ENCODE measurements at regions of chr5 and their contacts with region 1.

Region 1: DNA sequence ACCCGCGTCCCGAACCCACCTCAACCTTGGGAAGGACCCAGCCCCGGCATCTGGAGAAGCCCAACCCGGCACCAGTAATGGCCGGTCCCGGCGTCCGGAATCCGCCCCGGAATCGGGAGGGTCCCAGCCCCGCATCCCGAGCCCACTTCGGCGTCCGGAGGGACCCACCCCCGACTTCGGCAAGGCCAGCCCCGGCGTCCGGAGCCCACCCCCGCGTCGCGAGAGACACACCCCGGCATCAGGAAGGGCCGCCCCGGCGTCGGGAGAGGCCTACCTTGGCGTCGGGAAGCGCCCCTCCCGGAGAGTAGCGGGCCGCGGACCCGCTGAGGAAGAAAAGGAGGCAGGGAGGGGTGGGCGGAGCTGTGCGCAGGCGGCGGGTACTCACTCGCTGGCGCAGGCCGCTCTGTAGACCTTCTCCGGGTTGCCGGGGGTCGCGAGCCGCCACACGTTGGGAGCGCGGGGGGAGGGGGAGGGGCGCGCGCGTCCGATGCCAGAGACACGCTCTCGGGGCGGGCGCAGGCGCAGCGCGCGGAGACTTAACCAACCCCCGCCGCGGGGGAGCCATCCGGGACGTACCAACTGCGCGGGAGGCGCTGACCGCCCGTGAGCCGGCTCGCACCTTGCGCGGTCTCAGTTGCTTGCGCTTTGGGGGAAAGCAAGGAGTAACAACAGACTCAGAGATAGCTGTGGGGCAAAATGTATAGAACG is at the start of gene UIMC1:
- DNase-seq: peak; percentile 94
- ATAC-seq: peak; percentile 86
- H3K4me3 Mint-ChIP-seq: peak within 1 kb of the TSS; percentile 94
- H3K27ac Mint-ChIP-seq: peak within 1 kb of the TSS; percentile 89
- H3K4me1 Mint-ChIP-seq: peaks cover 26% of the 10 kb centered on the region
- H3K27me3 Mint-ChIP-seq: peaks cover 5% of the 10 kb centered on the region; the same call in 1 of the 2 replicates
- CTCF ChIP-seq: no peak
- total RNA-seq, gene UIMC1: 44.4 to 48.0 TPM (median 46.1 TPM) in 3 replicates

Region 2: GRCh38 chr5:177022384-177023308 is 16.2 kb after region 1 on chr5 and contains the start of gene ZNF346:
- CTCF ChIA-PET with region 1: interaction called, 19 read pairs
- POLR2A ChIA-PET with region 1: interaction called, 10 read pairs
- DNase-seq: peak; percentile 91
- ATAC-seq: peak; percentile 97
- H3K4me3 Mint-ChIP-seq: peak within 1 kb of the TSS; percentile 98
- H3K27ac Mint-ChIP-seq: peak within 1 kb of the TSS; percentile 95
- H3K4me1 Mint-ChIP-seq: peaks cover 11% of the 10 kb centered on the region
- H3K27me3 Mint-ChIP-seq: no peaks in the 10 kb centered on the region
- CTCF ChIP-seq: peak; percentile 38; the same call in 1 of the 2 replicates
- total RNA-seq, gene ZNF346: 18.4 to 25.4 TPM (median 19.4 TPM) in 3 replicates

Measured in WTC11 (cell line).